GM12878 (cell line): ENCODE measurements at regions of chr12 and their contacts with region 1.

Region 1: GRCh38 chr12:65169320-65170208 is at the start of gene LEMD3:
- DNase-seq: peak; percentile 59
- ATAC-seq: peak; percentile 90
- H3K4me3 ChIP-seq: peak within 1 kb of the TSS; percentile 86
- H3K27ac ChIP-seq: peak within 1 kb of the TSS; percentile 83
- H3K4me1 ChIP-seq: peaks cover 5% of the 10 kb centered on the region
- H3K27me3 ChIP-seq: no peaks in the 10 kb centered on the region
- CTCF ChIP-seq: no peak
- EP300 ChIP-seq: peak in 1 of 2 experiments; percentile 16; a peak in 1 of 4 replicates
- POLR2A ChIP-seq: peak; percentile 99
- RAD21 ChIP-seq: no peak
- polyA plus RNA-seq, gene LEMD3: 7.5 to 9.0 TPM

Region 2: DNA sequence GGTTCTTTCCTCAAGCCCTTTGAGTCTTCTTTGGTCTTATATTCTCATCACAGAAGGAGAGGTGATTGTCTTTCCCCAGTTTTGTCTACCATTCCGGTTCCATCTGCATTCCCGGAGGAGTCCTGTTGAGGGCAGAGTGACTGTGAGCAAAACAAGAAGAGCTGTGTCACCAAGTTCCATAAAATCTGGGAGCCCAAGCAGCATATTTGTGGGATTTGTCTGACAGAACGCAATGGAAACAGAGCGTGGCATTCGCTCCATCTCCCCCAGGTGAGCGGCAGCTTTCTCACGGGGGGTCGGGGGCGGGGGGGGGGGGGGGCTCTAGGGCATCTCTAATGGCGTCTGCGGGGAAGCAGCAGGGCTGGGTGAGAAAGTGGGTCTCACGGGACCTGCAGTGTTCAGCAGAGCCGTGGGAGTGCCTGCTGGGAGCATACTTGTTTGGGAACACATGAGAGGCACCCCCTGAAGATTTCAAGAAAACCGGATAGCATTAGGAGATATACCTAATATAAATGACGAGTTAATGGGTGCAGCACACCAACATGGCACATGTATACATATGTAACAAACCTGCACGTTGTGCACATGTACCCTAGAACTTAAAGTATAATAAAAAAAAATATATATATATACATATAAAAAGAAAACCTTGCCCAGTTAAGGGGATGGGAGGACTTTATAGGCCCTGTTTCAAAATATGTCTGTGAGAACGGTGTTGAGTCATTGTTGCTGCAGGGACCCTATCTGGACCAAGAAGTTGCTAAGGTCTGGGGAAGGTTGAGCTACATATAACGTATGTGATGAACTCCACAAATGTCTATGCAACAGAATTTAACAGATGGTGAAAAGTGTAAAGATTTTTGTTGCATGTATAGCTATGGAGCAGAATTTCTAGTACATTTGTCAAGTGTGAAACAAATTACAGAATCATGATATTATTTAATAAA is 285.7 kb before region 1 on chr12:
- CTCF ChIA-PET with region 1: no interaction called
- POLR2A ChIA-PET with region 1: interaction called, 10 read pairs
- RAD21 ChIA-PET with region 1: interaction called, 10 read pairs
- SMC1A ChIA-PET with region 1: interaction called, 14 read pairs
- in situ Hi-C with region 1: no loop called
- intact Hi-C with region 1: no loop called
- DNase-seq: no peak
- ATAC-seq: peak; percentile 59
- H3K4me3 ChIP-seq: peak overlapping the region; percentile 28; the same call in 1 of the 2 replicates
- H3K27ac ChIP-seq: peak overlapping the region; percentile 98
- H3K4me1 ChIP-seq: peaks cover 41% of the 10 kb centered on the region
- H3K27me3 ChIP-seq: no peaks in the 10 kb centered on the region
- CTCF ChIP-seq: no peak
- EP300 ChIP-seq: no peak
- POLR2A ChIP-seq: no peak
- RAD21 ChIP-seq: no peak; the same call in 1 of the 2 replicates

Region 3: GRCh38 chr12:65100140-65100539 is 69.4 kb before region 1 on chr12:
- CTCF ChIA-PET with region 1: no interaction called
- POLR2A ChIA-PET with region 1: no interaction called
- RAD21 ChIA-PET with region 1: no interaction called
- SMC1A ChIA-PET with region 1: no interaction called
- in situ Hi-C with region 1: no loop called
- intact Hi-C with region 1: no loop called
- DNase-seq: no peak
- ATAC-seq: no peak
- H3K4me3 ChIP-seq: no peak overlapping the region
- H3K27ac ChIP-seq: no peak overlapping the region
- H3K4me1 ChIP-seq: no peaks in the 10 kb centered on the region
- H3K27me3 ChIP-seq: no peaks in the 10 kb centered on the region; a peak in 1 of 4 replicates
- CTCF ChIP-seq: peak in 2 of 3 experiments; percentile 8 to 18; a peak in 1 of 6 replicates
- EP300 ChIP-seq: no peak
- POLR2A ChIP-seq: no peak
- RAD21 ChIP-seq: peak; percentile 56

Region 4: DNA sequence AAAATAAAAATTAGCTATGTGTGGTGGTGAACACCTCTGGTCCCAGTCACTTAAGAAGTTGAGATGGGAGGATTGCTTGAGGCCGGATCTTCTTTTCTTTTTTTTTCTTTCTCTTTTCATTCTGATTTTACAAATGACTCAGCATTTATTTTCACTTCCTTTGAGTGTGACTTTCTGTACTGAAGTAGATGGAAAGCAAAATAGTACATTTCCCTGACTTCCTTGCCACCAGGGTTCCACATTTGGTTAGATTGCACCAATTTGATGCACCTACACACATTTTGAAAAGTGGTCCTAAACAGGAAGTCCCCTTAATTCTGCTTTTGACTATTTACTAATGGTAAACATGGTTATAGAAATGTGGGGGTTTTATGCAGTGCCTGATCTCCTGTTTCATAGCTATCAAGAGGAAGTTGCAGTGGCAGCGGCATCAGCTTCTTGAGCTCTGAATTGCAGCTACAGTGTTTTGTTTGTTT is 13.2 kb before region 1 on chr12:
- CTCF ChIA-PET with region 1: interaction called, 21 read pairs
- POLR2A ChIA-PET with region 1: interaction called, 63 read pairs
- RAD21 ChIA-PET with region 1: interaction called, 44 read pairs
- SMC1A ChIA-PET with region 1: interaction called, 107 read pairs
- in situ Hi-C with region 1: no loop called
- intact Hi-C with region 1: no loop called
- DNase-seq: peak; percentile 77
- ATAC-seq: peak; percentile 90
- H3K4me3 ChIP-seq: peak overlapping the region; percentile 44
- H3K27ac ChIP-seq: peak overlapping the region; percentile 69
- H3K4me1 ChIP-seq: peaks cover 20% of the 10 kb centered on the region
- H3K27me3 ChIP-seq: no peaks in the 10 kb centered on the region
- CTCF ChIP-seq: no peak
- EP300 ChIP-seq: 0 out of 4 replicates have a peak, but pooled peaks of 1 of the 2 experiments have one; percentile 62
- POLR2A ChIP-seq: no peak
- RAD21 ChIP-seq: no peak

Region 5: GRCh38 chr12:65182012-65182739 is 12.6 kb after region 1 on chr12:
- CTCF ChIA-PET with region 1: interaction called, 30 read pairs
- POLR2A ChIA-PET with region 1: interaction called, 23 read pairs
- RAD21 ChIA-PET with region 1: interaction called, 25 read pairs
- SMC1A ChIA-PET with region 1: interaction called, 155 read pairs
- in situ Hi-C with region 1: no loop called
- intact Hi-C with region 1: no loop called
- DNase-seq: no peak
- ATAC-seq: peak; percentile 37
- H3K4me3 ChIP-seq: no peak overlapping the region
- H3K27ac ChIP-seq: no peak overlapping the region
- H3K4me1 ChIP-seq: peaks cover 17% of the 10 kb centered on the region
- H3K27me3 ChIP-seq: no peaks in the 10 kb centered on the region
- CTCF ChIP-seq: no peak
- EP300 ChIP-seq: no peak
- POLR2A ChIP-seq: no peak
- RAD21 ChIP-seq: no peak

Region 6: GRCh38 chr12:65189028-65189718 is 19.6 kb after region 1 on chr12:
- CTCF ChIA-PET with region 1: interaction called, 30 read pairs
- POLR2A ChIA-PET with region 1: interaction called, 23 read pairs
- RAD21 ChIA-PET with region 1: interaction called, 25 read pairs
- SMC1A ChIA-PET with region 1: interaction called, 155 read pairs
- in situ Hi-C with region 1: no loop called
- intact Hi-C with region 1: loop called (anchors 2 kb)
- DNase-seq: no peak
- ATAC-seq: peak; percentile 91
- H3K4me3 ChIP-seq: peak overlapping the region; percentile 30; the same call in 1 of the 2 replicates
- H3K27ac ChIP-seq: peak overlapping the region; percentile 83
- H3K4me1 ChIP-seq: peaks cover 33% of the 10 kb centered on the region
- H3K27me3 ChIP-seq: no peaks in the 10 kb centered on the region
- CTCF ChIP-seq: no peak
- EP300 ChIP-seq: peak in 1 of 2 experiments; percentile 48; a peak in 1 of 4 replicates
- POLR2A ChIP-seq: no peak
- RAD21 ChIP-seq: no peak

Region 7: GRCh38 chr12:65209655-65210043 is 40.1 kb after region 1 on chr12:
- CTCF ChIA-PET with region 1: interaction called, 9 read pairs
- POLR2A ChIA-PET with region 1: interaction called, 21 read pairs
- RAD21 ChIA-PET with region 1: interaction called, 25 read pairs
- SMC1A ChIA-PET with region 1: interaction called, 16 read pairs
- in situ Hi-C with region 1: no loop called
- intact Hi-C with region 1: no loop called
- DNase-seq: no peak
- ATAC-seq: peak; percentile 86
- H3K4me3 ChIP-seq: no peak overlapping the region
- H3K27ac ChIP-seq: peak overlapping the region; percentile 80
- H3K4me1 ChIP-seq: peaks cover 21% of the 10 kb centered on the region
- H3K27me3 ChIP-seq: no peaks in the 10 kb centered on the region
- CTCF ChIP-seq: no peak
- EP300 ChIP-seq: no peak
- POLR2A ChIP-seq: no peak
- RAD21 ChIP-seq: no peak